ENCODE measurements at regions of chrX and their contacts with region 1.

Region 1: DNA sequence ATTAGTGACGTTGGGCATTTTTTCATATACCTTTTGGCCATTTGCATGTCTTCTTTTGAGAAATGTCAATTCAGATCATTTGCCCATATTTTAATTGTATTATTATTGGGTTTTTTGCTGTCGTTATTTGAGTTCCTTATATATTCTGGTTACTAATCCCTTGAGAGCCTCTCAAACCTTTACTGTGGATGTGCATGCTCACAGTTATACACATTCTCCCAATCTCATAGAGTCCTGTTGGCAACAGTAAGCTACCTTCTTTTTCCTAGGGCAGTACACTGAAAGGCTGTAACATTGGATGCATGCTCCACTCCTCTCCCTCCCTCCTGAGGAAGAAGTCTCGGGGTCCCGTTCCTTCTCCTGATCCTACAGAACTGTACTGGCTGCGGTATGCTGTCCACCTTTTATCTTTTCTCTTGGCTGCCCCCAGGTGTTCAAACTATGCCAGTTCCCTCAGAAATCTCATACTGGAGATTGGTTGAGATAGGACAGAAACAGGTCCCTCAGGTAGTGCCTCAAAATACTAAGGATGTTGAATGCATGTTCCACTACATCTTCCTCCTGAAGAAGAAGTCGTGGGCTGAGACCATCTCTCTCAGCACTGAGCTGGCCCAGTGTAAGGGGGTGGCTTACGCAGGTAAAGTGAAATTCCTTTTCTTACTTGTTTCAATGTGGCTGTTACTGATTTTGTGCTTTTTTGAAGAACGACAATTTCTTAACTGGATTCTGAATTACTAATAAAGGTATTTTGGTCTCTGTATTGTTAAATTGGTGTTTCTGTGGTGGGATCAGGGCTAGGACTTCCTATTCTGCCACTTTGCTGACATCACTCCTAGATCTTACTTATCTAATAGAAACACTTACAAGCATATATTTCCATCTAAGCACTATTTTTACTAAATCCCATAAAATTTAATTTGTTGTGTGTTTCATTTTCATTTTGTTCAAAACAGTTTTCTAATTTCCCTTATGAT is 145.4 kb upstream of the HUWE1 start:
- DNase-seq: no peak
- ATAC-seq: no peak
- H3K4me3 ChIP-seq: no peak overlapping the region
- H3K27ac ChIP-seq: no peak overlapping the region
- H3K4me1 ChIP-seq: no peaks in the 10 kb centered on the region
- H3K27me3 ChIP-seq: no peaks in the 10 kb centered on the region
- CTCF ChIP-seq: no peak

Region 2: GRCh38 chrX:53571494-53571893 is 260.5 kb before region 1 on chrX:
- intact Hi-C with region 1: loop called in 1 of 2 experiments (anchors 5 kb)
- DNase-seq: no peak
- ATAC-seq: no peak
- H3K4me3 ChIP-seq: no peak overlapping the region
- H3K27ac ChIP-seq: no peak overlapping the region
- H3K4me1 ChIP-seq: no peaks in the 10 kb centered on the region
- H3K27me3 ChIP-seq: no peaks in the 10 kb centered on the region
- CTCF ChIP-seq: no peak

Region 3: DNA sequence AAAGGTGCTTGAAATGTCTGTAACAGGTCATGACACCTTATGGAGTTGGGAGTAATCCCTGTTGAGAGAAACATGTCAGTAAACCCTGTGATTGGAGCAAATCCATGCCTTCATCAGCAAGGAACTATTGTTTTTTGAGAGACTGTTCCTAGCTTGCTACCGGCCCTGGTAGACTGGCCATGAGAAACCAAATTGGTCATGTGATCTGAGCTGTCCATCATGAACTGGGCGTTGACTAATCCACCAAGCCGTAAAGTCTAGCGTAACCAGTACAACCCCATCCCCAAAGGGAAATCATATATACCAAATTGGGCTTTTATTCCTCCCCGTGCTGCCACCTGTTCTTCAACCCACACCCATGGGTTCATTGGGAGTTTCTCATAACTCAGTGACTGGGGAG is 68.7 kb after region 1 on chrX:
- intact Hi-C with region 1: no loop called
- DNase-seq: no peak
- ATAC-seq: no peak
- H3K4me3 ChIP-seq: no peak overlapping the region
- H3K27ac ChIP-seq: no peak overlapping the region
- H3K4me1 ChIP-seq: no peaks in the 10 kb centered on the region
- H3K27me3 ChIP-seq: peaks cover 0 to 7% (median 0%) of the 10 kb centered on the region in 3 donors
- CTCF ChIP-seq: no peak

Measured in psoas muscle (tissue), 8 donors.